Left ventricle myocardium inferior (tissue), 1 donor: ENCODE measurements at regions of chr22 and their contacts with region 1.

Region 1: GRCh38 chr22:28855355-28856094 is 27.8 kb upstream of the ZNRF3 start:
- DNase-seq: no peak
- H3K4me3 ChIP-seq: no peak overlapping the region
- H3K27ac ChIP-seq: no peak overlapping the region
- H3K4me1 ChIP-seq: peaks cover 5% of the 10 kb centered on the region
- H3K27me3 ChIP-seq: no peaks in the 10 kb centered on the region
- CTCF ChIP-seq: peak; percentile 96

Region 2: GRCh38 chr22:28810821-28811491 is 44.6 kb before region 1 on chr22:
- intact Hi-C with region 1: no loop called
- DNase-seq: no peak
- H3K4me3 ChIP-seq: no peak overlapping the region
- H3K27ac ChIP-seq: peak overlapping the region; percentile 46
- H3K4me1 ChIP-seq: peaks cover 27% of the 10 kb centered on the region
- H3K27me3 ChIP-seq: no peaks in the 10 kb centered on the region
- CTCF ChIP-seq: no peak

Region 3: GRCh38 chr22:29040385-29041275 is 185.1 kb after region 1 on chr22:
- intact Hi-C with region 1: loop called (anchors 2 kb)
- DNase-seq: no peak
- H3K4me3 ChIP-seq: no peak overlapping the region
- H3K27ac ChIP-seq: no peak overlapping the region
- H3K4me1 ChIP-seq: peaks cover 4% of the 10 kb centered on the region
- H3K27me3 ChIP-seq: no peaks in the 10 kb centered on the region
- CTCF ChIP-seq: peak; percentile 99

Region 4: DNA sequence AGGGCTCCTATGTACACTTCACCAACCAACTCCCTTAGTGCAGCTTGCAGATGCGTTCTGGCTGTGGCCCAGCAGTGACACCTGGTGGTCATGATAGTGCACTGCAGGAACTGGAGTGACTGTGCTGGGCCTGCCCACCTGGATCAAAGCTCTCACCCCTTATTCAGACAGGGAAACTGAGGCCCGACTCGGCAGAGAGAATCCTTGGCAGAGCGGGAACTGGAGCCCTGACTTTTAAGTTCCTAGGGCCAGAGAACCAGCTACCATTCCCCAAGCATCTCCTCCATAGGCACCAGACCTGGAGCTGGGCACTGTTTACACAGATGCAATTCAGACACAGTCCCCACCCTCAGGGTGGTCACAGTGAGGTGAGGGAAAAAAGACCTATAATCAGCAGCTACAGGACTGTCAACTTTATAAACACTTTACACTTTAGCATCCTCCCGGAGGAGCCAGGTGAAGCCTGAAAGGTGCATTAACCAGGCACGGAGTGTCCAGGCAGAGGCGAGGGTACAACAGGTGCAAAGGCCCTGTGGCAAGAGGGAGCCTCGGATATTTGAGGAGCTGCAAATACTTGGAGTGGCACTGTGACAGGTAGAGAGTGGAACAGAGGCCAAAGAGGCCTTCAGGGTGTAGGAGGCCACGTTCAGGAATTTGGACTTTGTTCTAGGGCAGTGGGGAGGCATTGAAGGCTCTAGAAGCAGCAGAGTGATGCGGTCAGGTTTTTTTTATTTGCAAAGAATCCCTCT is 390.3 kb after region 1 on chr22:
- intact Hi-C with region 1: loop called (anchors 10 kb)
- DNase-seq: peak; percentile 66
- H3K4me3 ChIP-seq: no peak overlapping the region
- H3K27ac ChIP-seq: no peak overlapping the region
- H3K4me1 ChIP-seq: no peaks in the 10 kb centered on the region
- H3K27me3 ChIP-seq: no peaks in the 10 kb centered on the region
- CTCF ChIP-seq: peak; percentile 99